K562 (cell line): ENCODE measurements at regions of chrX and their contacts with region 1.

Region 1: GRCh38 chrX:132219343-132219768 is at the start of gene RAP2C:
- DNase-seq: peak; percentile 55 to 88 (median 67)
- ATAC-seq: peak; percentile 83
- H3K4me3 ChIP-seq: peak within 1 kb of the TSS; percentile 70
- H3K27ac ChIP-seq: peak within 1 kb of the TSS; percentile 74
- H3K4me1 ChIP-seq: peaks cover 0 to 4% of the 10 kb centered on the region in 2 experiments; a peak in 2 of 5 replicates
- H3K27me3 ChIP-seq: no peaks in the 10 kb centered on the region
- CTCF ChIP-seq: peak; percentile 67 to 69 (median 69)
- EP300 ChIP-seq: no peak
- POLR2A ChIP-seq: no peak
- RAD21 ChIP-seq: peak; percentile 67 to 71
- polyA plus RNA-seq, gene RAP2C: 13.0 to 16.6 TPM

Region 2: GRCh38 chrX:132022967-132023895 is 196.1 kb before region 1 on chrX and contains the start of gene STK26:
- CTCF ChIA-PET with region 1: no interaction called
- POLR2A ChIA-PET with region 1: no interaction called
- in situ Hi-C with region 1: no loop called
- intact Hi-C with region 1: loop called (anchors 5 kb)
- DNase-seq: peak; percentile 79 to 89 (median 82)
- ATAC-seq: peak; percentile 87
- H3K4me3 ChIP-seq: peak within 1 kb of the TSS; percentile 95
- H3K27ac ChIP-seq: peak within 1 kb of the TSS; percentile 89
- H3K4me1 ChIP-seq: peaks cover 9 to 17% of the 10 kb centered on the region in 2 experiments; a peak in 3 of 5 replicates
- H3K27me3 ChIP-seq: no peaks in the 10 kb centered on the region
- CTCF ChIP-seq: no peak
- EP300 ChIP-seq: no peak
- POLR2A ChIP-seq: peak; percentile 94
- RAD21 ChIP-seq: no peak
- polyA plus RNA-seq, gene STK26: 28.1 to 29.3 TPM

Region 3: DNA sequence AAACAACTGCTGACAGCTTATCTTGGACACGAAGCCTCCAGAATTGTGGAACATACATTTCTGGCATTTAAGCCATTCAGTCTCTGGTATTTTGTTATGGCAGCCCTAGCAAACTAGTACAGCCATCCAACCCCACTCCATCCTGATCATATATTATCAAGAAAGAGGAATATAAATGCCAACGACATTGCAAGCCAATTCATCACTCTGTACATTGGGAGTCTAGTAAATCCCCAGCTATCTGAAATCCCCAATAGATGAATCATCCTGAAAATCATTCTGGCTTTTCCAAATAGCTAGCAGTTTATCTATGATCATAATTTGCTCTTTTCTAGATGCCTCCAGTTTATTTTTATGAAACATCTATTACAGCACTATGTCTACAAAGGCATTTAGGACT is 132.7 kb before region 1 on chrX:
- CTCF ChIA-PET with region 1: no interaction called
- POLR2A ChIA-PET with region 1: no interaction called
- in situ Hi-C with region 1: loop called (anchors 10 kb)
- intact Hi-C with region 1: no loop called
- DNase-seq: no peak
- ATAC-seq: no peak
- H3K4me3 ChIP-seq: no peak overlapping the region
- H3K27ac ChIP-seq: no peak overlapping the region
- H3K4me1 ChIP-seq: no peaks in the 10 kb centered on the region
- H3K27me3 ChIP-seq: peaks cover 0 to 5% of the 10 kb centered on the region in 2 experiments; a peak in 3 of 5 replicates
- CTCF ChIP-seq: no peak
- EP300 ChIP-seq: no peak
- POLR2A ChIP-seq: no peak
- RAD21 ChIP-seq: no peak

Region 4: DNA sequence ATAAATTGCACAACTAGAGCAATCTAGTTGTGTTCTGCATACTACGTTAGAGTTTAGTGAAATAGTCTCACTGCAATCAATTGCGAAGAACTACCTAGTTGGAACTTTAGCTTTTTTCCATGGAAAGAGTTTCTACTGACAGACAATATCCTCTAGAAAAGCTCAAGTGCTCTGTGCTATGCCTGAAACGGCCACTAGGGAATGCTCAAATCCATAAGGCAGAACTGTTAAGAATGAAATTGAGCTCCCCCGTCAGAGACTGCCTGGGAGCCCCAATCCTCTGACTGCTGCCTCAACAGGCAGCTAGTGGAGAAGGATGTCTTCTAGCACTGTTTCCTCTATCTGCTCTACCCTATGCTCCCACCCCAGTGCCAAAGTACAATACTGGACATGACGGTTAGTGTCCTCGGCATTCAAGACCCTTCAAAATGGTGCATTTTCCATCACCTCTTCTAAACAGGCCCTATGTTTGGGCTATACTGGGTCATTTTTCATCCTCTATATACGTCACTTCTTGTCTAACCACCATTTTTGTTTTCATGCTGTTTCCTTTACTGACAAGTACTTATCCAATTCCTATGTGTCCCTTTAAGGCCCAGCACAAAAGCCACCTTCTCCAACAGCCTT is 126.8 kb before region 1 on chrX:
- CTCF ChIA-PET with region 1: no interaction called
- POLR2A ChIA-PET with region 1: no interaction called
- in situ Hi-C with region 1: loop called (anchors 10 kb)
- intact Hi-C with region 1: loop called (anchors 1 kb)
- DNase-seq: peak; percentile 53 to 77 (median 55)
- ATAC-seq: peak; percentile 96
- H3K4me3 ChIP-seq: no peak overlapping the region
- H3K27ac ChIP-seq: no peak overlapping the region
- H3K4me1 ChIP-seq: no peaks in the 10 kb centered on the region
- H3K27me3 ChIP-seq: no peaks in the 10 kb centered on the region; a peak in 1 of 5 replicates
- CTCF ChIP-seq: peak; percentile 70 to 87 (median 80)
- EP300 ChIP-seq: no peak
- POLR2A ChIP-seq: no peak
- RAD21 ChIP-seq: peak; percentile 50 to 71

Region 5: DNA sequence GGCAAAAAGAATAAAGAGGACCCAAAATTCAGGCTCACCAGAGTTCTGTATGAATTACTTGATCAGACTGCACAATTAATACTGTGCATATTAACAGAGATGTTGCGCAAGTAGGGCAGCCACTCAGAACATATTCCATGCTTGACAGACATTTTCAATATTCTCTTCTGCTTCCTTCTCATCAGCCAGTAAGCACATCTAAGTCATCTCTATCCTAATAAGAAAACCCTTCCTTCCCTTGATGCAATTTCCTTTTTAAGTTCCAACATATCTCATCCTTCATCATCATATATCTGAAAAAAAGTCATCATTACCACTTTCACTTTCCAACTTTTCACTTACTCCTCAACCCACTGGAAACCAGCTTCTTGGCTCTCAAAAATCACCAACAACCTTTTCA is 255.2 kb after region 1 on chrX:
- CTCF ChIA-PET with region 1: no interaction called
- POLR2A ChIA-PET with region 1: interaction called, 3 read pairs
- in situ Hi-C with region 1: no loop called
- intact Hi-C with region 1: loop called (anchors 5 kb)
- DNase-seq: no peak
- ATAC-seq: no peak
- H3K4me3 ChIP-seq: no peak overlapping the region
- H3K27ac ChIP-seq: no peak overlapping the region
- H3K4me1 ChIP-seq: no peaks in the 10 kb centered on the region
- H3K27me3 ChIP-seq: no peaks in the 10 kb centered on the region
- CTCF ChIP-seq: no peak
- EP300 ChIP-seq: no peak
- POLR2A ChIP-seq: no peak
- RAD21 ChIP-seq: no peak